Aorta (tissue), 5 donors: ENCODE measurements at regions of chr22 and their contacts with region 1.

Region 1: DNA sequence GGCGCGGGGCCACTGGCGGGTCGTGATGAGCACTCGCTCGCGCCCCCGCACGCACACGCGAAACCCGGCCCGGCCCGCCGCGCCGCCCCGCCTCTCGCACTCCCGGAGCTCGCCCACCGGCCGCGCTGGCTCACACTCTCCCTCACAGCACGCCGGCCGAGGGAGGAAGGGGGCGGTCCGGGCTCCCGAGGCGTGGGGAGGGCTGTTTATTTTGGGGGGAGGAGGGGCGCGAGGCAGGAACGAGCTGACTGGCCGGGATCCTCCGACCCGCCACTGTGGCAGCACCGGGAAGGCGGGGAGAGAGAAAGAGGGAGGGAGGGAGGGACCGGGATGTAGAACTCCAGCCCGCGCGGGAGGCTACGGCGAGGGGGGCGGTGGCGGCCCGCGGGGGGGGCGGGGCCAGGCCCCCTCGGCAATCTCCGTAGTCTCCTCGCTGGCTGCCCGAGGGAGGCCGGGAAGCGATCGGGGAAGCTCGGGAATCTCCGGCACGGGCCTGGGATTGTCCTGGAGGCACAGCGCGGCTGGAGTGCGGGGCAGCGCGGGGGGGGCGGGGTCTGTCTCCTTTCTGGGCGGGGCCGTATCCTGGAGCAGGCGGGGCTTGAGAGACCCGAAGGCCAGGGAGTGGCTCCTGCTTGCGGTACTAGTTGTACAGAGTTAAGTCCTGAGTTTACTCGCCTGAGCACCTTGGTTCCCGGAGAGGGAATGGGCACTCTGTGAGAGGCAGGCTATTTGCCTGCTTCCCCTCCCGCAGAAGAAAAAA is at the start of gene RBFOX2:
- DNase-seq: peak; percentile 97 to 99
- ATAC-seq: peak; percentile 98
- H3K4me3 ChIP-seq: peak within 1 kb of the TSS; percentile 85 to 89
- H3K27ac ChIP-seq: peak within 1 kb of the TSS; percentile 71 to 90
- H3K4me1 ChIP-seq: peaks cover 0 to 2% of the 10 kb centered on the region in 2 donors
- H3K27me3 ChIP-seq: no peaks in the 10 kb centered on the region
- total RNA-seq, gene RBFOX2: 117 to 152 TPM

Region 2: DNA sequence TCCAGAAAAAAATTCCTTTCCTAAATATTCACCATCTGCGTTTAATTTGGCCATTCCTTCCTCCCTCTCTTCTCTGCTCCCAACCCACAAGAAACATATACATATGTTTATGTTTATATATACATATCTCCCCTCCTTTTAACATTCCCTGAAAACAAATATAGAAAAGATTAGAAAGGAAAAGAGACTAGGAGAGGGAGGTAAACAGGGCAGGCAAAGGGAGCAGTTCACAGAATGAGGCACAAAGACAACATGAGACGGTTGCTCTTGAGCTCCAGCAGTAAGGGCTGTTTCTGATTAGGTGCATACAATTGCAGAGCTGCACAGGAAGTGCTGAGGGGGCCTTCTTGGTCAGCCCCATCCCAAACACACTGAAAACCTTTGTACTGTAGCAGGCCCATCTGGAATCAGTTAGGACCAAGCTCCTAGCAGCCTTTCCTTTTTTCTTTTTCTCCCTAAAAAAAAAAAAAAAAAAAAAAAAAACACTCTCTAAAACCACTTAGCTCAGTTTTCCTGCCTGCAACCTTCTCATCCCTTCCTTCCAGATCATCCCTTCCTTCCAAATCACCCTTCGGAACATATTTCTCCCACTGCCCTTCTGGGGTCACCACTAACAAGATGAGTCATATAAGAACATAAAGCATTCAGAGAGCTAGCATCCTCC is 57.2 kb before region 1 on chr22:
- intact Hi-C with region 1: loop called (anchors 5 kb)
- DNase-seq: no peak
- ATAC-seq: no peak
- H3K4me3 ChIP-seq: no peak overlapping the region
- H3K27ac ChIP-seq: peak overlapping the region; percentile 80 to 83
- H3K4me1 ChIP-seq: peaks cover 8 to 21% of the 10 kb centered on the region in 2 donors
- H3K27me3 ChIP-seq: no peaks in the 10 kb centered on the region